ENCODE measurements at regions of chr2 and their contacts with region 1.

Region 1: DNA sequence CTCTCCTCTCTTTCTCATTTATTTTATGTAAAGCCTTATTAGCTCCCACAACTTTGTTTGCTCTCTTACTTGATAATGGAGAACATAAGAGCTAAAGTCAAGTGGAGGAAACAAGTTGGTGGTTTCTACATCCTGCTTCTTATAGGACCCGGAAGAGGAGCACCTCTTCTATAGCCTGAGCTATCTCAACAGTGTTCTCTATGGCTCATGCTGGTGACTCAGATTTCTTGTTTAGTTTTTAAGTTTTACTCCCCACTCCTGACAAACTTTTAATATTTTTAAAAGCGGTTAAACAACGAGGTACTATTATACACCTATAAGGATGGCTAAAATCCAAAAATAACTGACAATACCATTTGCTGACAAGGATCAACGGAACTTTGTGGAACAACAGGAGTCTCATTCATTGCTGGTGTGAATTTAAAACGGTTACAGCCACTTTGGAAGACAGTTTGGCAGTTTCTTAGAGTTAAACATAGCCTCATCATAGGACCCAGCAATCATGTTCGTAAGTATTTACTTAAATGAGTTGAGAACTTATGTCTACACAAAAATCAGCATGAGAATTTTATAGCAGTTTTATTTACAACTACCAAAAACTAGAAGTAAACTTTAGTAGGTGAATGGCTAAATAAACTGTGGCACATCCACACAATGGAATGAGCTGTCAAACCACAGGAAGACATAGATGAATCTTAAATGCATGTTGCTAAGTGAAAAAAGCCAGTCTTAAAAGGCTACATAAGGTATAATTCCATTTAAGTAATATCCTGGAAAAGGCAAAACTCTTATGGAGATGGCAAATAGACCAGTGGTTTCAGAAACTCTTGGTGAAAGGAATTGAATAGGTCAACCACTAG is 12.7 kb upstream of the CDC42EP3 start:
- DNase-seq: peak; percentile 55
- ATAC-seq: peak; percentile 88
- H3K4me3 ChIP-seq: 0 out of 2 replicates have a peak overlapping the region, but pooled peaks have one; percentile 21
- H3K27ac ChIP-seq: peak overlapping the region; percentile 69
- H3K4me1 ChIP-seq: peaks cover 10% of the 10 kb centered on the region; the same call in 1 of the 2 replicates
- H3K27me3 ChIP-seq: no peaks in the 10 kb centered on the region
- CTCF ChIP-seq: no peak

Region 2: GRCh38 chr2:37711308-37711731 is 27.2 kb after region 1 on chr2:
- CTCF ChIA-PET with region 1: no interaction called
- POLR2A ChIA-PET with region 1: no interaction called
- intact Hi-C with region 1: loop called (anchors 1 kb)
- DNase-seq: peak; percentile 94
- ATAC-seq: peak; percentile 98
- H3K4me3 ChIP-seq: no peak overlapping the region
- H3K27ac ChIP-seq: peak overlapping the region; percentile 3; the same call in 1 of the 2 replicates
- H3K4me1 ChIP-seq: peaks cover 28% of the 10 kb centered on the region
- H3K27me3 ChIP-seq: no peaks in the 10 kb centered on the region
- CTCF ChIP-seq: no peak

Region 3: GRCh38 chr2:38064801-38065501 is 380.8 kb after region 1 on chr2:
- CTCF ChIA-PET with region 1: no interaction called
- POLR2A ChIA-PET with region 1: no interaction called
- intact Hi-C with region 1: no loop called
- DNase-seq: no peak
- ATAC-seq: no peak
- H3K4me3 ChIP-seq: no peak overlapping the region
- H3K27ac ChIP-seq: no peak overlapping the region
- H3K4me1 ChIP-seq: no peaks in the 10 kb centered on the region
- H3K27me3 ChIP-seq: no peaks in the 10 kb centered on the region
- CTCF ChIP-seq: no peak

Measured in PC-3 (cell line).